ENCODE measurements at regions of chr10 and their contacts with region 1.

Region 1: GRCh38 chr10:63629363-63630084 is 108.3 kb downstream of the REEP3 start:
- DNase-seq: peak; percentile 87
- H3K4me3 Mint-ChIP-seq: peak overlapping the region; percentile 87
- H3K27ac Mint-ChIP-seq: peak overlapping the region; percentile 88
- H3K4me1 Mint-ChIP-seq: peaks cover 39% of the 10 kb centered on the region
- H3K27me3 Mint-ChIP-seq: peaks cover 24% of the 10 kb centered on the region

Region 2: DNA sequence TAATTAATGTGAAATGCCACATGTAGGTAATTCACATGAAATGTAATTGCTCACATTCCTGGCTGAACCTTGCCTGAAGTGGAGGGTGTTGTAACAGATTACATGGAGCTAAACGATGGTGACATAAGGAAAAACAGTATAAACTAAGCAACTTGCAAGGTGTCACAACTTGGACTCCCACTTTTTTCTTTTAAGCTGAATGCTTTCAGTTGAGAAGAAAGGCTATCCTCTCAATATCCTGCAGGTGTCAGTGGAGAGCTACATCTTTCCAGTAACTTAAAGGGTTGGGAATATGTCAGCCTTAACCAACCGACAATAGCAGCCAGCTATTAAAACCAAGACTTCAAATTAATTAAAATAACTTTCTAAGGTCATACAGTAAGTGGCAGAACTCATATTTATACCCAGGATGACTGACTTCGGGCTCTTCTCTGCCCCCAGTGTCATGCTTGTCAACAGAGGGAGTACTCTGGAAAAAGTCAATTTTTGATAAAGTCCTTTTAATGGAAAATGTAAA is 462.7 kb before region 1 on chr10:
- CTCF ChIA-PET with region 1: interaction called, 88 read pairs
- DNase-seq: no peak
- H3K4me3 Mint-ChIP-seq: no peak overlapping the region
- H3K27ac Mint-ChIP-seq: no peak overlapping the region
- H3K4me1 Mint-ChIP-seq: peaks cover 25% of the 10 kb centered on the region
- H3K27me3 Mint-ChIP-seq: no peaks in the 10 kb centered on the region

Region 3: DNA sequence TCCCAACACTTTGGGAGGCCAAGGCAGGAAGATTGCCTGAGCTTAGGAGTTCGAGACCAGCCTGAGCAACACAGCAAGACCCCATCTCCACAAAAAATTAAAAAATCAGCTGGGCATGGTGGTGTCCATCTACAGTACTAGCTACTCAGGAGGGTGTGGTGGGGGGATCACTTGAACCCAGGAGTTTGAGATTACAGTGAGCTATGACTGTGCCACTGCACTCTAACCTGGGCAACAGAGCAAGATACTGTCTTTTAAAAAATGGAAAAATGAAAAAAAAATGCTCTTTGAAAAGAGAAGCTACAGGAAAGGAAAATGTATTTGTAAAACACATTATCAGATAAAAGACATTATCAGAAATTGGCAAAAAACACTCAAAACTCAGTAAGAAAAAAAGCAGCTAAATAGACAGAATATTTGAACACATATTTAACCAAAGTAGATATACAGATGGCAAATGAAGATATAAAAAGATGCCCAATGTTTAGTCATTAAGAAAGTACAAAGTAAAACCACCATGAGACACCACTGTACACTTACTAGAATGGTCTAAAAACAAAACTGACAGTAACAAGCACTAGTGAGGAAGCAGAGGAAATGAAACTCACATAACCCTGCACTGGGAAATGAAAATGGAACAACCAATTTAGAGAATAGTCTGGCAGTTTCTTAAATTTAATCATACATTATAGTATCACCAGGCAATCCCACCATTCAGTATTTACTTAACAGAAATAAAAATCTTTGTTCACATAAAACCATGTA is 455.9 kb before region 1 on chr10:
- CTCF ChIA-PET with region 1: interaction called, 11 read pairs
- DNase-seq: no peak
- H3K4me3 Mint-ChIP-seq: no peak overlapping the region
- H3K27ac Mint-ChIP-seq: peak overlapping the region; percentile 80
- H3K4me1 Mint-ChIP-seq: peaks cover 49% of the 10 kb centered on the region
- H3K27me3 Mint-ChIP-seq: no peaks in the 10 kb centered on the region

Region 4: DNA sequence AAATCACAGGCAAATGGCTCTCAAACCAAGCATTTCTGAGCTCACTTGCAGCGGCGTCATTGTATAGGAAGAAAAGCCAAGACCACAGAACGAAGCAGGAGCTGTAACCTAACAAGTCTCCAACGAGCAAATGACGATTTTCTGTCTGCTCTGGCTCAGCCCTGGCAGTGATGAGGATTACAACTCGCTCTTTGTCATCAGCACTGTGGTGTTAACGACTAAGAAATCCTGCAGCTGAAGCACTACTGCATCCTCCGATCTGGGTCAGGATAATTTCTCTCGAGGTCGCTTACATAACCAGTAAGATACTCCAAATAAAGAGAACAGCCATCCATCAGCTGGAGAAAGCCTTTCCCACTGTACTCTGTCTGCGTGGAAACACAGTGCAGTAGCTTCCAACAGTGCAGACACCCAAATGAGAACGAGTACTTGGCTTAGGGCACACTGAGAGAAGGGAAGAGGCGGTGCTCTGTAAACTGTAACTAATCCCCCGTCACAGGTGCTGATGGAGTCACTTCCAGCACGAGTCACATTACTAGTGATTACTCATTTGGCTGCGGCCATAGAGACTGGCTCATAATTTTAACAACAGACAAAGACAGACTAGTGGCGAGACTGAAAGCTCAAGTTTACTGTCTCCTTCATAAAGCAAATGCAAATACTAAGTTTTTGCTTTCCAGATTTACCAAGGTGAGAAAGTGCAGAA is 360.6 kb before region 1 on chr10:
- CTCF ChIA-PET with region 1: interaction called, 20 read pairs
- DNase-seq: peak; percentile 86
- H3K4me3 Mint-ChIP-seq: peak overlapping the region; percentile 95
- H3K27ac Mint-ChIP-seq: peak overlapping the region; percentile 100
- H3K4me1 Mint-ChIP-seq: peaks cover 25% of the 10 kb centered on the region
- H3K27me3 Mint-ChIP-seq: no peaks in the 10 kb centered on the region